ENCODE measurements at regions of chr17 and their contacts with region 1.

Region 1: GRCh38 chr17:35189291-35189690 is 4.9 kb downstream of the SLC35G3 start:
- DNase-seq: no peak
- ATAC-seq: no peak
- H3K4me3 ChIP-seq: no peak overlapping the region
- H3K4me3 Mint-ChIP-seq: peak overlapping the region in 9 of 10 donors; percentile 45 to 84 (median 68)
- H3K27ac ChIP-seq: no peak overlapping the region
- H3K27ac Mint-ChIP-seq: peak overlapping the region in 7 of 9 donors; percentile 6 to 94 (median 89)
- H3K4me1 ChIP-seq: peaks cover 14 to 53% of the 10 kb centered on the region in 2 donors
- H3K4me1 Mint-ChIP-seq: peaks cover 44 to 91% (median 72%) of the 10 kb centered on the region in 7 donors
- H3K27me3 ChIP-seq: no peaks in the 10 kb centered on the region
- H3K27me3 Mint-ChIP-seq: peaks cover 0 to 4% (median 0%) of the 10 kb centered on the region in 5 donors

Region 2: DNA sequence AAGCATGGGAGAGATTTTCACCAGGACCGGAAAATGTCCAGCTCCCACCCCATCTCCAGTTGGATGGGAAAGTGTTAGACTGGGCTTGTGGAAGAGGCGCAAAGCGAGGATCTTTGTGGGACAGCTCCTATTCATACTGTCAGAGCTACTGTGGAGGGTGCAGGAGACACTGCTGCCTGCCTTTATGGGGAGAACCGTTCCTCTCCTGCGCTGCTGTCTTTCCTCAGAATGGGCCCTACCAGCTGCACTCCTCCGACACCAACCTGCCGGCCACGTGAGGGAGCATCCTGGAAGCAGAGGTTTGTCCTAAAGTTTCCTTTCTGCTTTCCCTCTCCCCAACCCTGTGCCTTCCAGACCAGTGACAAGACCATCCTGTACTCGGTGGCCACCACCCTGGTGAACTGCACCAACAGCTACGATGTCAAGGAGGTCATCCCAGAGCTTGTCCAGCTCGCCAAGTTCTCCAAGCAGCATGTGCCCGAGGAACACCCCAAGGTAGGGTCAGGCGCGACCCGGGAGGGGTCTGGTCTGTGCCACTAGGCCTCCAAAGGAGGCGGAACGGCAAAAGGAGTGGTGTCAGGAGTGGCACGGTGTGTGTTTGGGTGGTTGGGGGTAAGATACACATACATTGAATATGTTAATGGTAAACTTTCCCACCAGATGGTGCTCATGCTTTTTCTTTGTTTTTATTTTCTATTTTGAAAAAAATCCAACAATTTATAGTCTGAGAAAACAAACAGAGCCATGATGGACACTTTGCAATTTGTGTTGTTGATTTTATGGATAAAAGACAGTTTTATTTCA is 18.1 kb before region 1 on chr17:
- CTCF ChIA-PET with region 1: no interaction called
- POLR2A ChIA-PET with region 1: interaction called, 6 read pairs
- intact Hi-C with region 1: loop called in 1 of 2 experiments (anchors 1 kb)
- DNase-seq: peak in 7 of 9 donors; percentile 35 to 77 (median 70)
- ATAC-seq: peak; percentile 86
- H3K4me3 ChIP-seq: peak overlapping the region; percentile 25
- H3K4me3 Mint-ChIP-seq: peak overlapping the region in 8 of 10 donors; percentile 46 to 79 (median 70)
- H3K27ac ChIP-seq: peak overlapping the region; percentile 47
- H3K27ac Mint-ChIP-seq: peak overlapping the region; percentile 65 to 96 (median 89)
- H3K4me1 ChIP-seq: peaks cover 16 to 20% of the 10 kb centered on the region in 2 donors
- H3K4me1 Mint-ChIP-seq: peaks cover 24 to 59% (median 44%) of the 10 kb centered on the region in 7 donors
- H3K27me3 ChIP-seq: no peaks in the 10 kb centered on the region
- H3K27me3 Mint-ChIP-seq: no peaks in the 10 kb centered on the region